T-cell (primary cell): ENCODE measurements at regions of chr7 and their contacts with region 1.

Region 1: DNA sequence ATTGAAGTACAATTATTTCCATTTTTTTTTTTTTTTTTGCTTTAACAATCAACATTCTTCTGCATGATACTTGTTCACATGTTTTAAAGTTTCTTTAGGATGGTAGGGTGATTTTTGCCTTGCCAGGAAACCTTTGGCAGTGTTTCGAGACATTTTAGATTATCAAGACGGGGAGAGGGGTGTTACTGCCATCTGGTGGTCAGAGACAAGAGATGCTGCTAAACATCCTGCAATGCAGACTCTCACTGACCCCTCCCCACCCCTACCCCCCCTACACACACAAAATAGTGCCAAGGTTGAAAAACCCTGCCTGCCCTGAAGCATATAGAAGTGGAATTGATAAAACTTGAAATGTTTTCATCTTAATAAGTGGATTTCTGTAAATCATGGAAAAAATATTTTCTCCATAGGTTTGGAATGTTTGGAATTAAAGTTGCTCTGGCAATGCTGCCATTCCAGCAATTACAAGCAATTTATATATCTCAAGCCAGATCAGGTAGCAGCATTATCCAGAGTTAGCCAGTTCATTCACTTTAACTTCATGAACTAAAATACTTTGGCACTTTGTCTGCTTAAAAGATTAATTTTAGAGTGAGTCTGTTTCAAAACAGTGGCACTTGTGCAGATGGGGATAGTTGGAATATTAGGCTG is 62.1 kb downstream of the SDHAF3 start:
- DNase-seq: peak in 32 of 35 experiments; percentile 3 to 71 (median 33)
- ATAC-seq: peak; percentile 37 to 51 (median 46)
- H3K4me3 ChIP-seq: no peak overlapping the region
- H3K4me3 Mint-ChIP-seq: no peak overlapping the region
- H3K27ac ChIP-seq: no peak overlapping the region
- H3K27ac Mint-ChIP-seq: no peak overlapping the region
- H3K4me1 ChIP-seq: no peaks in the 10 kb centered on the region
- H3K4me1 Mint-ChIP-seq: peaks cover 2 to 8% (median 2%) of the 10 kb centered on the region in 3 donors
- H3K27me3 ChIP-seq: no peaks in the 10 kb centered on the region
- H3K27me3 Mint-ChIP-seq: no peaks in the 10 kb centered on the region

Region 2: DNA sequence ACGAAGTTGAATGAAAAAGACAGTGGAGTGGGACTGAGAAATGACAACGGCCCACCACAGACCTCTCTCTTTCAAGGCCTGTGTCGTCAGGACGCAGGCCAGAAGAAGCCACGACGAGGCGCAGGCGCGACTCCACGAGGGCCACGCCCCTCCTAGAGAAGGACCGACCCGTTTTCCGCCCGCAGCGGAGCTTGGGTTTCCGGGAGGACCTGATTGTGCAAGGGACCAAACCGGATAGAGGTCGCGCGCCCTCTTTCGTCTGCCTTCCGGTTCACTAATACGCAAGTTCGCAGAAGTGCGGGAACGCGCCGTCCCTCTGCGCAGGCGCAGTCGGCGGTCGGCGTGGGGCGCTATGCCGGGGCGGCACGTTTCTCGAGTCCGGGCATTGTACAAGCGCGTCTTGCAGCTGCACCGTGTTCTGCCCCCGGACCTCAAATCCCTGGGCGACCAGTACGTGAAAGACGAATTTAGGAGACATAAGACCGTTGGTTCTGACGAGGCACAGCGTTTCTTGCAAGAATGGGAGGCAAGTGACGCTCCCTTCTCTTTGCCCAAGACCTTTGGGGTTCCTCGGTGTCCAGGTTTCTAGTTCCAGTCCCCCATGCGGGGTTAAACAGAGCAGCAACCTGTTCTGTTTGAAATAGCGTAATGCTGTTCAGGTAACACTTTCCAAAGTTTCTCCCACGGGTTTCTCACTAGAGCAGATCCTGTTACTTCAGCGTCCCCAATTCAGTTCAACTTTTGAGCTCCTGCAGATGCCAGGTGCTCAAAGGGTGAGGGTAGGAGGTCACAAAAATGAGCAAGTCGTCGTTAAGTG is 62.0 kb before region 1 on chr7 and contains the start of gene SDHAF3:
- CTCF ChIA-PET with region 1: interaction called, 5 to 10 read pairs
- POLR2A ChIA-PET with region 1: no interaction called
- DNase-seq: peak; percentile 96 to 99 (median 98)
- ATAC-seq: peak; percentile 92 to 95 (median 94)
- H3K4me3 ChIP-seq: peak within 1 kb of the TSS; percentile 82 to 89
- H3K4me3 Mint-ChIP-seq: peak within 1 kb of the TSS; percentile 92 to 97 (median 94)
- H3K27ac ChIP-seq: peak within 1 kb of the TSS; percentile 90
- H3K27ac Mint-ChIP-seq: peak within 1 kb of the TSS; percentile 80 to 94
- H3K4me1 ChIP-seq: peaks cover 11 to 20% of the 10 kb centered on the region in 2 experiments
- H3K4me1 Mint-ChIP-seq: peaks cover 47 to 58% (median 53%) of the 10 kb centered on the region in 3 donors
- H3K27me3 ChIP-seq: no peaks in the 10 kb centered on the region
- H3K27me3 Mint-ChIP-seq: no peaks in the 10 kb centered on the region
- total RNA-seq, gene SDHAF3: 11.1 to 15.3 (median 12.0) TPM

Region 3: DNA sequence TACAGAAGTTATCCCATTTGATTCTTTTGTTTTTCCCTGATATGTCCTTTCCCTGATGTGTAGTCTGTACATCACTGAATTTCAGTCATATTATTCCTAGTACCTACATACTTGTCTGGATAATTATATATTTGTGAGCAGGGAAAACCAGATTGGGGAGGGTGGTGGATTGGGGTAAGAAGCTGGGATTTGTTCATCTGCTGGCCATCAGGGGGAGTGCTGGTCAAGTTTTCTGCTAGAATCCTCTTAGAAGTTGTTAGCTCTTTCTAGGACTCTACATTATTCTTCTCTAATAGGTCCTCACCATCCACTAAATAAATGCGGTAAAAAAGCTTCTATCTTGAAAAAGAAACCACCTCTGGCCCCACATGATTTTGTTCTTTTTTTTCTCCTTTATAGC is 319.6 kb after region 1 on chr7:
- CTCF ChIA-PET with region 1: no interaction called
- POLR2A ChIA-PET with region 1: no interaction called
- DNase-seq: peak in 1 of 35 experiments; percentile 13
- ATAC-seq: no peak
- H3K4me3 ChIP-seq: no peak overlapping the region
- H3K4me3 Mint-ChIP-seq: no peak overlapping the region
- H3K27ac ChIP-seq: no peak overlapping the region
- H3K27ac Mint-ChIP-seq: no peak overlapping the region
- H3K4me1 ChIP-seq: no peaks in the 10 kb centered on the region
- H3K4me1 Mint-ChIP-seq: no peaks in the 10 kb centered on the region
- H3K27me3 ChIP-seq: peaks cover 0 to 3% of the 10 kb centered on the region in 2 experiments
- H3K27me3 Mint-ChIP-seq: peaks cover 0 to 2% of the 10 kb centered on the region in 2 donors

Region 4: DNA sequence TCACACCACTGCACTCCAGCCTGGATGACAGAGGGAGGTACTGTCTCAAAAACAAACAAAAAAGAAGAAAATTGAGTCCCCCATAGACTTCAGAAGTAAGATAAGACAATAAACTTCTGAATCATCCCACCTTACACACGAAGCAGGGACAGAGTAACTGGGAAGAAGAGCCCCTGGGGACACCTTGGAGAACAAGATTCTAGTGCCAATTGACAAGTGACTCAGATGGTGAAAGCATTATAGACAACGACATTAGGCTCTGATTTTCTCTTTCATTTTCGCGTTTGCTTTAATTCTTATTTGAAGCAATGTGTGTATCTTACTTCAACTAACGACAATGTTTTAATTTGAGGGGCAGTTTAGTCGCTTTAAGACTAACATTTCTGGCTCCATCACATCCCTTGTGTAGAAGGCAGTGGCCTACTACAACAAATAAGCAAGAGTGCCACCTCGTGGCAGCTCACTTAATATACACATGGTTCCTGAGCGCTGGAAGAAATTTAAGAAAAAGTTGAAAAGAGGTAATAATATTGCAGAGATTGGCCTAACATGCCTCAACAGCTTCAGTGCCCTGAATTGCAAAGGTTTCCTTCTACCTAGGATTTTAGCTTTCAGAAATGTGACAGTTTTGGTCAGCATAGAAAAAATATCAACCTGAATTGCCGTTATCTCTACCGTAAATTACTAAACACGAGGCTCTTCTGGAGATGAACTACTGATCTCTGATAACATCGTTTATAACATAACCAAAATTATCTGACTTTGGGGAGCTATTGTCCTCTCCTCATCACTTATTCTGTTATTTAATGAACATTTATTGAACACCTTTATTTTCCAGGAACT is 655.9 kb after region 1 on chr7:
- CTCF ChIA-PET with region 1: no interaction called
- POLR2A ChIA-PET with region 1: no interaction called
- DNase-seq: peak in 34 of 35 experiments; percentile 2 to 70 (median 42)
- ATAC-seq: peak in 3 of 4 experiments; percentile 59 to 75 (median 65)
- H3K4me3 ChIP-seq: no peak overlapping the region
- H3K4me3 Mint-ChIP-seq: no peak overlapping the region
- H3K27ac ChIP-seq: no peak overlapping the region
- H3K27ac Mint-ChIP-seq: no peak overlapping the region
- H3K4me1 ChIP-seq: no peaks in the 10 kb centered on the region
- H3K4me1 Mint-ChIP-seq: no peaks in the 10 kb centered on the region
- H3K27me3 ChIP-seq: peaks cover 7 to 10% of the 10 kb centered on the region in 2 experiments
- H3K27me3 Mint-ChIP-seq: peaks cover 45 to 50% of the 10 kb centered on the region in 2 donors